Ascending aorta (tissue), 2 donors: ENCODE measurements at regions of chr15 and their contacts with region 1.

Region 1: DNA sequence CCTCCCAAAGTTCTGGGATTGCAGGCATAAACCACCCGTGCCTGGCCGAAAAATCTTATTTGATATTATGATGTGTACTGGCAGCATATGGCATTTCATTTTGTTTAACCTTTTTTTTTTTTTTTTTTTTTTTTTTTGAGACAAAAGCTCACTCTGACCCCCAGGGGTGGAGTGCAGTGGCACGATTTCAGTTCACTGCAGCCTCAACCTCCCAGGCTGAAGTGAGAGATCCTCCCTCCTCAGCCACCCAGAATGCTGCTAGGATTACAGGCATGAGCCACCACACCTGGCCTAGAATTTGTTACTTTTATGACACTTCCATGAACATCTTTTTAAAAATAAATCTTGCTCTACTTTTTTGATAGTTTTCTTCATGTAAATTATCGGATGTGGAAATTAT is 12.0 kb downstream of the TERB2 start:
- DNase-seq: no peak
- H3K4me3 ChIP-seq: no peak overlapping the region
- H3K27ac ChIP-seq: no peak overlapping the region
- H3K4me1 ChIP-seq: no peaks in the 10 kb centered on the region
- H3K27me3 ChIP-seq: no peaks in the 10 kb centered on the region
- CTCF ChIP-seq: no peak

Region 2: DNA sequence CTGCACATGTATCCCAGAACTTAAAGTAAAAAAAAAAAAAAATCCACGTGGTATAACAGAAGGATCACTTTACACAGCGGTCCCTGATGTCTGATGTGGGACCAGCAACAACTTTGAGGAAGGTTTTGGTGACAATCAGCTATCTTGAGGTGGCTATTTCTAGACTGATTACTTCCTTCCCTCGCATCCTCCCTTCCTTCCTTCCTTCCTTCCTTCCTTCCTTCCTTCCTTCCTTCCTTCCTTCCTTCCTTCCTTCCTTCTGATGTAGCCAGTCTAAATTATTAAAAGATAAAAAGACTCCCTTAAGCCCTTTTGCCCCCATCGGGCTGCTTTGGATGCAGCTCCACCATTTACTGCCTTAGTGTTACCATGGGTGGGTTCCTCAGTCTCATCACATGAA is 69.5 kb after region 1 on chr15:
- intact Hi-C with region 1: loop called (anchors 1 kb)
- DNase-seq: no peak
- H3K4me3 ChIP-seq: no peak overlapping the region
- H3K27ac ChIP-seq: no peak overlapping the region
- H3K4me1 ChIP-seq: no peaks in the 10 kb centered on the region
- H3K27me3 ChIP-seq: no peaks in the 10 kb centered on the region
- CTCF ChIP-seq: no peak

Region 3: DNA sequence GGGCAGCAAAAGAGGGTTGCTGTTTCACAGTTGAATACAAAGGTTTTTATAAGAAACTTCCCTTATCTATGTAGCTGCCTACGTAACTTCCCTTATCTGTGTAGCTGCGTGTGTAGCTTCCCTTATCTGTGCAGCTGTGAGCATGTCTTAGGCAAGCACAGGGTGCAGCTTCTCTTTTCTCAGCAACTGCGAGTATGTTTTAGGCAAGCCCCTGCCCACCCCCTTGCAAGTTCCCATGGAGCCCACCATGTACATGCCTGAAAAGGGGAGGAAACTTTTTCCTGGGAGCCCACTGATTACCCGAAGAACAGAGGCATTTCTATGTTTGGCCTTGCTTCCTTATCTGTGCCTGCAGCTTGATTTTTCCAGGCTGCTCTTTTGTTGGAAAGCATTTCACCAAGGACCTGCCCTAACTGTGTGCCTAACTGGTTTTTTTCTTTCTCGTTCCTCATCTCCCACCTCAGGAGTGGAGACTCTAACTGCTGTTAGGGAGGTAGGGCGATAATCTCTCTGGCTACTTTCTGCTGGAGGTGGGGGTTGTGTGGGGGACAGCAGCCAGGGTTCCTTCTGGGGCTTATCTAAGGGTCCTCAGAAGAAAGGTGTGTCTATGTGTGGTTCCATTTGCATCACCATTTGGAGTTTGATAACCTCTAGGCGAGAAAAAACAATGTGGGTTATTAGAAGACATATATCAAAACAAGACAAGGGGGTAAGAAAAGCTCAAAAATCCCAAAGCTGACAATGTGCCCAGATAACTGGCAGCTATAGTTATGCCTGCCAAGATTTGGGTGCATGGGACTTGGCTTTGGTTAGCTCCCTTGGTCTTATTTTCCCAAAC is 80.5 kb after region 1 on chr15:
- intact Hi-C with region 1: no loop called
- DNase-seq: no peak
- H3K4me3 ChIP-seq: no peak overlapping the region
- H3K27ac ChIP-seq: peak overlapping the region; percentile 51 to 52
- H3K4me1 ChIP-seq: peaks cover 0 to 4% of the 10 kb centered on the region in 2 donors
- H3K27me3 ChIP-seq: no peaks in the 10 kb centered on the region
- CTCF ChIP-seq: no peak